ENCODE measurements at regions of chr6 and their contacts with region 1.

Region 1: GRCh38 chr6:152982768-152983636 is at the start of gene FBXO5:
- DNase-seq: peak; percentile 94 to 99 (median 98)
- ATAC-seq: peak; percentile 88
- H3K4me3 ChIP-seq: peak within 1 kb of the TSS; percentile 99
- H3K27ac ChIP-seq: peak within 1 kb of the TSS; percentile 94
- H3K4me1 ChIP-seq: peaks cover 9 to 24% of the 10 kb centered on the region in 2 experiments
- H3K27me3 ChIP-seq: no peaks in the 10 kb centered on the region
- CTCF ChIP-seq: no peak
- EP300 ChIP-seq: no peak; the same call in none of the 2 replicates
- POLR2A ChIP-seq: peak; percentile 87
- RAD21 ChIP-seq: no peak; a peak in 1 of 4 replicates
- polyA plus RNA-seq, gene FBXO5: 17.8 to 18.4 TPM

Region 2: GRCh38 chr6:151409260-151409659 is 1573.7 kb before region 1 on chr6:
- CTCF ChIA-PET with region 1: no interaction called
- POLR2A ChIA-PET with region 1: no interaction called
- in situ Hi-C with region 1: loop called (anchors 25 kb)
- intact Hi-C with region 1: no loop called
- DNase-seq: no peak
- ATAC-seq: no peak
- H3K4me3 ChIP-seq: no peak overlapping the region
- H3K27ac ChIP-seq: no peak overlapping the region
- H3K4me1 ChIP-seq: no peaks in the 10 kb centered on the region
- H3K27me3 ChIP-seq: no peaks in the 10 kb centered on the region
- CTCF ChIP-seq: no peak
- EP300 ChIP-seq: no peak
- POLR2A ChIP-seq: no peak
- RAD21 ChIP-seq: no peak

Region 3: DNA sequence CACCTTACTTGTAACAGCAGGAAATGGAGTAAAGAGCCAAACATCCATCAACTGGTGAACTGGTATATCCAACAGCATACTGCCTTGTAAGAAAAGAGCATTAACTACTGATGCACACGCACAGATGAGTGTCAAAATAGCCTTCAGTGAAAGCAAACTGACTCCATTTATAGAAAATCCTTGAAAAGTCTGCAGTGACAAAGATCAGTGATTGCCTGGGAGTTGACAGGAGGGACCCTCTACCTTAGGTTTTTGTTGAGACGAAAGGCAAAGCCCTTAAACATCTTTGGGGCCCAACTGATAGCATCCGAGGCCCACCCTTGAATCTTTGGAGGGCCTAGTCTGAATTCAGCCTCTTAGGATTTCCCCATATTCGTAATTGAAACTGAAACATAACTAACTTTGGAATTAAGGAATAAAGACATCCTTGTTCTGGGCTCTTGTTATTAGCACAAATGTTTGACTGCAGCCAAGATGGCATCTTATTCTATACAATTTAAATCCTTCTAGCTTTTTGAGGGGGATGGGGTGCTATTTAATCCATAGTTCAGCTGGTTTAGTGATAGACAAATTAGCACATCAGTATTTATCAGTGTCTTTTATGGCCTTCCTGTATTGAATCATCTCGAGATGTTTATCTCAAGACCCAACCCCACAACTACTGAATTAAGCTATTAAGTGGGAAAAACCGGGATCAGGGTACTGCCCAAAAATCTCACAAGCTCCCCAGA is 13.1 kb before region 1 on chr6:
- CTCF ChIA-PET with region 1: no interaction called
- POLR2A ChIA-PET with region 1: interaction called, 11 read pairs
- in situ Hi-C with region 1: no loop called
- intact Hi-C with region 1: no loop called
- DNase-seq: no peak
- ATAC-seq: peak; percentile 68
- H3K4me3 ChIP-seq: no peak overlapping the region
- H3K27ac ChIP-seq: no peak overlapping the region
- H3K4me1 ChIP-seq: peaks cover 0 to 5% of the 10 kb centered on the region in 2 experiments; a peak in 1 of 5 replicates
- H3K27me3 ChIP-seq: no peaks in the 10 kb centered on the region
- CTCF ChIP-seq: no peak
- EP300 ChIP-seq: no peak
- POLR2A ChIP-seq: peak; percentile 84
- RAD21 ChIP-seq: no peak

Region 4: DNA sequence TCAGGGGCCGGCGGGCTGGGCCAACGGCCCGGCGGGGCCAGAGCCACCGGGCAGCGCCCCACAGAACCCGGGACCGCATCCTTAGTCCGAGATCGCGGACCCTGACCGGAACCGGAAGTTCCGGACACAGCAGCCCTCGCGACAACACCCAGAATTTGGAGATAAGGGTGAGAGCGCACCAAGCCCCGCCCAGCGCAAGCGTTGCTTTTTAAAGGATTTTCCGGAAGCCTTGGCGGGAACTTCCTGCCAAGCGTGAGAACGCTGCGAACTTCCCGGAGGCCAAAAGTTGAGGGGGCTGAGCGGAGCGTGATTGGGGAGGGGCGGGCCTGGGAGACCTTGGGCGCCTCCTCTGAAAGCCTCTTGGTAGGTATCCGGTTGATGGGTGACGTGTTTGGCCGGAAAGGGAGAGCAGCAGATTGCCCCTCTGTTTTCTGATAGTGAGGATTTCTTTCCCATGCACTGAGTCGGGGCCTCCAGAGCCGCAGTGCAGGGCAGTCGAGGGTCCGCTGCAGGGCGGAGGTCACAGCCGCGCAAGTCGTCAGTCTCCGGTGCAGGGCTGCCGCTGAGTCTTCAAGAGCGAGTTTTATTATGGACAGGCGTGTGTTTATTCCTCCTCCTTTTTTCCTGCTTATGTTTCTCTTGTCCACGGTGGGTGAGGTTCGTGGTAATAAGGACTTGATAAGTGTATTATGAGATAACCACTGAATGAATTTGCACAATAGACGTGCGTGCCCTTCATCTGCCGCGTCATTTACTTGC is 19.8 kb after region 1 on chr6 and contains the start of gene MTRF1L:
- CTCF ChIA-PET with region 1: no interaction called
- POLR2A ChIA-PET with region 1: interaction called, 37 read pairs
- in situ Hi-C with region 1: no loop called
- intact Hi-C with region 1: loop called (anchors 2 kb)
- DNase-seq: peak; percentile 94 to 100 (median 95)
- ATAC-seq: peak; percentile 92
- H3K4me3 ChIP-seq: peak within 1 kb of the TSS; percentile 89
- H3K27ac ChIP-seq: peak within 1 kb of the TSS; percentile 88
- H3K4me1 ChIP-seq: peaks cover 0 to 3% of the 10 kb centered on the region in 2 experiments; a peak in 2 of 5 replicates
- H3K27me3 ChIP-seq: no peaks in the 10 kb centered on the region; a peak in 1 of 5 replicates
- CTCF ChIP-seq: 0 out of 6 replicates have a peak, but pooled peaks of 1 of the 3 experiments have one; percentile 2
- EP300 ChIP-seq: no peak
- POLR2A ChIP-seq: peak; percentile 89
- RAD21 ChIP-seq: no peak
- polyA plus RNA-seq, gene MTRF1L: 10.7 to 13.7 TPM

Region 5: DNA sequence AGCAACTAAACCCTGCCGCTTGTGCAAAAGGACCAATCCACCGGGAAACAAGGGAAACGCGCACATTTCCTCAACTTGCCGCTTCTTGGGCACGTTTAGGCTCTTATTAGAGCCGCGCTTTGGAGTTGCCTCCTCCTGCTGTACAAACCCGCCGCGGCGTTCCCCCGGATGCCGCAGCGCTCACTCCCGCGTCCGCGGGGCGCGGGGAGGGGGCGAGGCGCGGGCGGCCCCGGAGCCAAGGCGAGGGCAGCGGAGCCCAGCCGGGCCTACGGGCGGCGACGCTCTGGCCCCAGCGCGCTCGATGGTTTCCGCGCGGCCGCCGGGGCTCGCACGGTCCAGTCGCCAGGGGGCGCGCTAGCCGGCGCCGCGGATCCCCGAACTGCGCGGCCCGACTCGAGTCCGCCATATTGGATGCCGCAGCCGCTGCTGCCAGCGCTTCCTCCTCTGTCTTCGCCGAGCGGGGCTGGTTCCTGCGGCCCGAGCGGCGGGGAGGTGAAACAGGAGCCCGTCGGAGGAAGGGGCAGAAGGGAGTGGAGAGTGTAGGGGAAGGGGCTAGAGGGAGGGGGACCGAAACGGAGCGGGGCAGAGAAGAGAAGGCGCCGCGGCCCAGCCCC is 1750.1 kb after region 1 on chr6 and contains the start of gene SCAF8:
- CTCF ChIA-PET with region 1: no interaction called
- POLR2A ChIA-PET with region 1: no interaction called
- in situ Hi-C with region 1: no loop called
- intact Hi-C with region 1: loop called (anchors 10 kb)
- DNase-seq: peak; percentile 85 to 93 (median 88)
- ATAC-seq: peak; percentile 85
- H3K4me3 ChIP-seq: peak within 1 kb of the TSS; percentile 96
- H3K27ac ChIP-seq: peak within 1 kb of the TSS; percentile 99
- H3K4me1 ChIP-seq: peaks cover 20 to 28% of the 10 kb centered on the region in 2 experiments; a peak in 4 of 5 replicates
- H3K27me3 ChIP-seq: no peaks in the 10 kb centered on the region
- CTCF ChIP-seq: peak; percentile 71 to 91 (median 86)
- EP300 ChIP-seq: no peak
- POLR2A ChIP-seq: peak; percentile 96
- RAD21 ChIP-seq: peak; percentile 46 to 52
- polyA plus RNA-seq, gene SCAF8: 10.5 to 11.8 TPM

Measured in K562 (cell line).